IMR-90 (cell line): ENCODE measurements at regions of chr3 and their contacts with region 1.

Region 1: DNA sequence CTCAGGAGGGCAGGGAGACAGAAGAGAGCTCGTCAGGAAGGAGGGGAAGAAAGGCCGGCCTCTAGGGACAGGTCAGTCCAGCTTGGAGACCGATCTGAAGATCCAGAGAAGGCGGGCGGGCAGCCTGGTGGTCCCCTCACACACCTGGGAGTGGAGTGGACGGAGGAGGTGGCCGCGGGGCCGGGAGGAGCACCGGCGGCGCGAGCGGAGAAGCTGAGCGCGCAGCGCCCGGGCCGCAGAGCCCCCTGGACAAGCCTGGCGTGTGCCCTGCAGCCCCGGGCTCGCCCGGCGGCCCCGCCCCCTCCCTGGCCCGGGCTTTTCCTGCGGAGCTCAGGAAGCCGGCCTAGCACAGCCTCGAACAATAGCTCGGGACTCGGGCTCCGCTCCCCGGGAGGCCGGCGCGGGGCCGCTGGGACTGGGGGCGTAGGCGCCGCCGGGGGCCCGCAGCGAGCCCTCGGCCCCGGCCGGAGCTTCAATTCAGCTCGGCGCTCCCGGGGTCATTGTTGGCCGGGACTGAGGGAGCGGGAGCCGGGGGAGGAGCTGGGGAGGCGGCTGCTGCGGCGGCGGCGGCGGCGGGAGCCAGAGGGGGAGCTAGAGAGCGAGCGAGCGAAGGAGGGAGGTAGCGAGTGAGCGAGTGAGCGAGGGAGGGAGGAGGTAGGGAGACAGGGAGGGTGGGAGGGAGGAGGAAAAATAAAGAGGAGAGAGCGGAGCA is 40.9 kb upstream of the ROPN1 start:
- DNase-seq: peak; percentile 71
- ATAC-seq: peak; percentile 98
- H3K4me3 ChIP-seq: peak overlapping the region; percentile 55
- H3K27ac ChIP-seq: peak overlapping the region; percentile 28; the same call in 1 of the 2 replicates
- H3K4me1 ChIP-seq: peaks cover 1% of the 10 kb centered on the region; the same call in 1 of the 2 replicates
- H3K27me3 ChIP-seq: peaks cover 32% of the 10 kb centered on the region
- CTCF ChIP-seq: peak; percentile 60
- POLR2A ChIP-seq: no peak
- RAD21 ChIP-seq: no peak

Region 2: GRCh38 chr3:123834631-123835030 is 198.2 kb before region 1 on chr3:
- CTCF ChIA-PET with region 1: no interaction called
- POLR2A ChIA-PET with region 1: no interaction called
- dilution Hi-C with region 1: no loop called
- in situ Hi-C with region 1: no loop called
- intact Hi-C with region 1: no loop called
- DNase-seq: peak; percentile 90
- ATAC-seq: peak; percentile 83
- H3K4me3 ChIP-seq: no peak overlapping the region
- H3K27ac ChIP-seq: peak overlapping the region; percentile 74; the same call in 1 of the 2 replicates
- H3K4me1 ChIP-seq: peaks cover 16% of the 10 kb centered on the region
- H3K27me3 ChIP-seq: no peaks in the 10 kb centered on the region
- CTCF ChIP-seq: no peak
- POLR2A ChIP-seq: no peak
- RAD21 ChIP-seq: no peak

Region 3: GRCh38 chr3:123920383-123920782 is 112.4 kb before region 1 on chr3:
- CTCF ChIA-PET with region 1: no interaction called
- POLR2A ChIA-PET with region 1: no interaction called
- dilution Hi-C with region 1: no loop called
- in situ Hi-C with region 1: no loop called
- intact Hi-C with region 1: no loop called
- DNase-seq: no peak
- ATAC-seq: no peak
- H3K4me3 ChIP-seq: no peak overlapping the region
- H3K27ac ChIP-seq: no peak overlapping the region
- H3K4me1 ChIP-seq: no peaks in the 10 kb centered on the region
- H3K27me3 ChIP-seq: no peaks in the 10 kb centered on the region
- CTCF ChIP-seq: no peak
- POLR2A ChIP-seq: no peak
- RAD21 ChIP-seq: no peak

Region 4: GRCh38 chr3:123941121-123941520 is 91.7 kb before region 1 on chr3:
- CTCF ChIA-PET with region 1: interaction called, 4 read pairs
- POLR2A ChIA-PET with region 1: interaction called, 14 read pairs
- dilution Hi-C with region 1: no loop called
- in situ Hi-C with region 1: no loop called
- intact Hi-C with region 1: no loop called
- DNase-seq: no peak
- ATAC-seq: no peak
- H3K4me3 ChIP-seq: no peak overlapping the region
- H3K27ac ChIP-seq: no peak overlapping the region
- H3K4me1 ChIP-seq: peaks cover 2% of the 10 kb centered on the region; the same call in 1 of the 2 replicates
- H3K27me3 ChIP-seq: no peaks in the 10 kb centered on the region
- CTCF ChIP-seq: peak; percentile 37
- POLR2A ChIP-seq: no peak
- RAD21 ChIP-seq: peak; percentile 48

Region 5: GRCh38 chr3:125024817-125025216 is 992.0 kb after region 1 on chr3:
- CTCF ChIA-PET with region 1: no interaction called
- POLR2A ChIA-PET with region 1: no interaction called
- dilution Hi-C with region 1: no loop called
- in situ Hi-C with region 1: no loop called
- intact Hi-C with region 1: no loop called
- DNase-seq: no peak
- ATAC-seq: no peak
- H3K4me3 ChIP-seq: no peak overlapping the region
- H3K27ac ChIP-seq: no peak overlapping the region
- H3K4me1 ChIP-seq: peaks cover 2% of the 10 kb centered on the region; the same call in 1 of the 2 replicates
- H3K27me3 ChIP-seq: no peaks in the 10 kb centered on the region
- CTCF ChIP-seq: no peak
- POLR2A ChIP-seq: no peak
- RAD21 ChIP-seq: no peak